Activated naive CD4-positive, alpha-beta T cell treated with anti-CD3 and anti-CD28 coated beads for 36 hours (primary cell): ENCODE measurements at regions of chr12 and their contacts with region 1.

Region 1: GRCh38 chr12:68497702-68498101 is 113.0 kb upstream of the RAP1B start:
- DNase-seq: peak; percentile 17
- H3K4me3 Mint-ChIP-seq: peak overlapping the region; percentile 35
- H3K27ac Mint-ChIP-seq: peak overlapping the region; percentile 80
- H3K4me1 Mint-ChIP-seq: peaks cover 28% of the 10 kb centered on the region
- H3K27me3 Mint-ChIP-seq: no peaks in the 10 kb centered on the region

Region 2: GRCh38 chr12:67991158-67991557 is 506.5 kb before region 1 on chr12:
- CTCF ChIA-PET with region 1: no interaction called
- intact Hi-C with region 1: loop called (anchors 1 kb)
- DNase-seq: peak; percentile 74
- H3K4me3 Mint-ChIP-seq: peak overlapping the region; percentile 55
- H3K27ac Mint-ChIP-seq: peak overlapping the region; percentile 80
- H3K4me1 Mint-ChIP-seq: peaks cover 49% of the 10 kb centered on the region
- H3K27me3 Mint-ChIP-seq: peaks cover 2% of the 10 kb centered on the region

Region 3: DNA sequence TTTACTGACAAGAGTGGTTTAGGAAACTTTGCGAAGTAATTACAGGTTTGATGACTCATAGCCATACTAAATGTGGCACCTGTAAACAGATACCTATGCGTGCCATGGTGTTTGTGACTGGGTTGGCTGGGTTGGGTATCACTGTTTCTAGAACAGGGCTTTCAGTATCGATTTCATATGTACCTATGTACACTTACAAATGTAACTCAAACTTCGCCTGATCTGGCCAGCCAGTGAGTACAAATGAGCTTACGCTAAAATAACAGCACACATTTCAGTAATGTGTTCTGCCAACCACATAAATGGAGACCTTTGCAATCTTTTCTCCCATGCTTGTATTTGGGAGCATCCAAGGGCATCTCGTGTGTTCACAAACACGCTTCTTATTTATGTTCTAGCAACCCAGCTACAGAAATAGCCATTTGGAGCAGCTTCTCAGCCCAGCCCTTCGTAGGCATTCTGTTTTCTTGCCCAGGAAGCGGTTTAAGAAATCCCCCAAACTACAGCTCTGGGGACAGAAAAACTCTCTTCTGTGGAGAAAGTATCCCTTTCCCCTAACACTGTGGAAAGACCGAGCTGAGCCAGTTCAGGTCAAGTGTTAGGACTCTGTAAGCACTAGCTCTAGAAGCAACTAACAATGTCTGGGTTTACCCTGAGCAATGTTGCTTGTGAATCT is 123.3 kb before region 1 on chr12:
- CTCF ChIA-PET with region 1: no interaction called
- intact Hi-C with region 1: loop called (anchors 1 kb)
- DNase-seq: peak; percentile 77
- H3K4me3 Mint-ChIP-seq: no peak overlapping the region
- H3K27ac Mint-ChIP-seq: peak overlapping the region; percentile 89
- H3K4me1 Mint-ChIP-seq: peaks cover 46% of the 10 kb centered on the region
- H3K27me3 Mint-ChIP-seq: peaks cover 3% of the 10 kb centered on the region

Region 4: DNA sequence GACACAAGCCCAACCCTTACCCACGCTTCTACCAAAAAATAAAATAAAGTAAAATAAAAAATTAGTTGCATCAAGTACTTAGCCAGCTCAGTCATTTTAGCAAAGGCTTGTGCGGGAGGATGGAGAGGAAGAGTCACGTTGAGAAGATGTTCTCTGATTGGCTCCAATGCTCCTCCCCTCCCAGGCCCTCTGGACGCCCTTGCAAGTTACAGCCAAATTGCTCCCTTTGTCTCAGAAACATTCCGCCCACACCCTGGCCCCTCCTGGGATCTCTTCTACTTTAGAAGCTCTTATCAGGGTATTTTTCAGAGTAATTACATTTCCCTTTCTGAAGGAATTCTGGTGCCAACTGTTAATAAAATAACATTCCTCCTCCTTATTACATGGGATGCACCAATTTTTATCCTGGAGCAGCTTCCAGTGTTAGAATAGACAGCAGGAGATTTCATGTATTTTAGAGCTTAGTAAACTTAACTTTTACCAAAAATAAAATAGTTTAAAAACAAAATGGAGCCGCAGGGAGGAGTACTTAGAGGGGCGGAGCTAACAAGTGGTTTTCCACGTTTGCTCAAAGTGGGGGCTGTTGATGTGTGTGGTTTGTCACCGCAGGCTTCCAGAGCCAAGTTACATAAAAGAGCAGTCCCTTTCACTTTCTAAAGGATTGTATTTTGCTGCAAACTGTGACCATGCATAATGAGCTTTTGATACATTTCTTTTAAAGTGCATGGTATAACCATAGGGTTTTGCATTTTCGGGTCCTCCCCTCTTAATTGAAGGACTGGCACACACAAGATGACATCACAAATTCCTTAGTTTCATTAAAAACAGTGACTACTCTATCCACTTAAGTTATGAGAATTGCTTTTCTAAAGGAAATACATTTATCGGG is 41.3 kb after region 1 on chr12:
- CTCF ChIA-PET with region 1: interaction called, 9 read pairs
- intact Hi-C with region 1: loop called (anchors 1 kb)
- DNase-seq: peak; percentile 73
- H3K4me3 Mint-ChIP-seq: peak overlapping the region; percentile 56
- H3K27ac Mint-ChIP-seq: peak overlapping the region; percentile 79
- H3K4me1 Mint-ChIP-seq: peaks cover 53% of the 10 kb centered on the region
- H3K27me3 Mint-ChIP-seq: no peaks in the 10 kb centered on the region

Region 5: GRCh38 chr12:68617160-68617926 is 119.6 kb after region 1 on chr12:
- CTCF ChIA-PET with region 1: interaction called, 3 read pairs
- intact Hi-C with region 1: loop called (anchors 1 kb)
- DNase-seq: peak; percentile 34
- H3K4me3 Mint-ChIP-seq: peak overlapping the region; percentile 6
- H3K27ac Mint-ChIP-seq: peak overlapping the region; percentile 82
- H3K4me1 Mint-ChIP-seq: peaks cover 84% of the 10 kb centered on the region
- H3K27me3 Mint-ChIP-seq: no peaks in the 10 kb centered on the region

Region 6: GRCh38 chr12:69059483-69060457 is 562.1 kb after region 1 on chr12:
- CTCF ChIA-PET with region 1: no interaction called
- intact Hi-C with region 1: loop called (anchors 10 kb)
- DNase-seq: peak; percentile 37
- H3K4me3 Mint-ChIP-seq: no peak overlapping the region
- H3K27ac Mint-ChIP-seq: peak overlapping the region; percentile 81
- H3K4me1 Mint-ChIP-seq: peaks cover 49% of the 10 kb centered on the region
- H3K27me3 Mint-ChIP-seq: no peaks in the 10 kb centered on the region